ENCODE measurements at regions of chr15 and their contacts with region 1.

Region 1: DNA sequence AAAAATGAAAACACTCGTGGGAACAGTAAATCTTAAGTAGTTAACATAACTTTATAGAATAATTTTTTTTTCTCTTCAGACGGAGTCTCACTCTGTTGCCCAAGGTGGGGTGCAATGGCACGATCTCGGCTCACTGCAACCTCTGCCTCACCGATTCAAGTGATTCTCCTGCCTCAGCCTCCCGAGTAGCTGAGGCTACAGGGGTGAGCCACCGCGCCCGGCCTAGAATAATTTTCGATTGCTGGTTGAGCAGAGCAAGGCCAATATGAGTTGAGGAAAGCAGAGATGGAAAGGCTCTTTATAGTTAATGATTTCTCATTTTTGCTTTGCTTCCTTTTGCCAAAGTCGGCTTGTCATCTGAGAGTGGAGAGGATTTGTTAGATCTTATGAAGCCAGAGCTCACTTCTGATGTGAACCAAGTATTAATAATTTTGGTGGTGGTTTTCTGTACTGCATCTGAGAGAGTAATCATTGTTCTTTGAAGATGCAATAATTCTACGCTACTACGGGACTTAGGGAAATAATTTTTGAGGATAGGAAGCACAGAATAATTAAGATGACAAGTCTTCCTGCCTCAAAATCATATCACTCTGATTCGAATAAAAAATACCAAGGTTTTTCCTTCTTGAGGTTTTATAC is 1.6 kb upstream of the GOLM2 start:
- DNase-seq: no peak
- H3K4me3 ChIP-seq: peak overlapping the region; percentile 79
- H3K27ac ChIP-seq: peak overlapping the region; percentile 90
- H3K4me1 ChIP-seq: peaks cover 24% of the 10 kb centered on the region; the same call in 1 of the 2 replicates
- H3K27me3 ChIP-seq: no peaks in the 10 kb centered on the region
- CTCF ChIP-seq: no peak; the same call in 1 of the 2 replicates

Region 2: GRCh38 chr15:43977072-43977884 is 309.7 kb before region 1 on chr15:
- CTCF ChIA-PET with region 1: no interaction called
- POLR2A ChIA-PET with region 1: no interaction called
- intact Hi-C with region 1: no loop called
- DNase-seq: peak; percentile 4 to 64
- H3K4me3 ChIP-seq: no peak overlapping the region
- H3K27ac ChIP-seq: no peak overlapping the region
- H3K4me1 ChIP-seq: peaks cover 14% of the 10 kb centered on the region
- H3K27me3 ChIP-seq: no peaks in the 10 kb centered on the region
- CTCF ChIP-seq: no peak

Region 3: GRCh38 chr15:44215594-44215993 is 71.3 kb before region 1 on chr15:
- CTCF ChIA-PET with region 1: no interaction called
- POLR2A ChIA-PET with region 1: no interaction called
- intact Hi-C with region 1: loop called (anchors 5 kb)
- DNase-seq: peak; percentile 26 to 71
- H3K4me3 ChIP-seq: no peak overlapping the region
- H3K27ac ChIP-seq: no peak overlapping the region
- H3K4me1 ChIP-seq: 0 out of 2 replicates have a peak, but pooled peaks cover 4% of the 10 kb centered on the region
- H3K27me3 ChIP-seq: no peaks in the 10 kb centered on the region
- CTCF ChIP-seq: no peak

Region 4: GRCh38 chr15:44879086-44879485 is 592.2 kb after region 1 on chr15:
- CTCF ChIA-PET with region 1: no interaction called
- POLR2A ChIA-PET with region 1: no interaction called
- intact Hi-C with region 1: no loop called
- DNase-seq: no peak
- H3K4me3 ChIP-seq: no peak overlapping the region
- H3K27ac ChIP-seq: no peak overlapping the region
- H3K4me1 ChIP-seq: peaks cover 14% of the 10 kb centered on the region; the same call in 1 of the 2 replicates
- H3K27me3 ChIP-seq: no peaks in the 10 kb centered on the region
- CTCF ChIP-seq: no peak

Measured in PC-9 (cell line).